Ovary (tissue), 10 donors: ENCODE measurements at regions of chr3 and their contacts with region 1.

Region 1: GRCh38 chr3:70982700-70983140 is 600.8 kb downstream of the FOXP1 start:
- DNase-seq: peak in 2 of 5 donors; percentile 22 to 41
- H3K4me3 ChIP-seq: no peak overlapping the region
- H3K27ac ChIP-seq: peak overlapping the region; percentile 74 to 78
- H3K4me1 ChIP-seq: peaks cover 18% of the 10 kb centered on the region
- H3K27me3 ChIP-seq: no peaks in the 10 kb centered on the region
- CTCF ChIP-seq: no peak
- EP300 ChIP-seq: no peak
- POLR2A ChIP-seq: no peak

Region 2: DNA sequence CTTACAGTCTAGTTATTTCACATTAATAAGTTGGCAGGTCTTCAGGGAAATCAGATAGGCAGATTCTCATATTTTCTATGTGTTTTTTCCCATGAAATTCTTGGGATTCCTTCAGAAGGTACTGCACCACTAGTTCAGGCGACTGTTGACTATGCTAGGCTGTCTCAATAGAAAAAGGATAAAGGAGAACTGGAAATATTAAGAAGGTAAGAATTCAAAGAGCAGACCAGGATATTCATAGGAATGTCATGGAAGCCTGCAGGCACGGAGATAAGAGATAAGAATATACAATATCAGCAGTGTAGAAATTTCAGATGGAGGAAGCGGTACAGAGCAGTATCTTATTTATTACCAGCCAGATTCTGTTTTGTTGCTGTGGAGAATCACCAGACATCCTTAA is 238.2 kb before region 1 on chr3:
- intact Hi-C with region 1: no loop called
- DNase-seq: no peak
- H3K4me3 ChIP-seq: no peak overlapping the region
- H3K27ac ChIP-seq: no peak overlapping the region
- H3K4me1 ChIP-seq: no peaks in the 10 kb centered on the region
- H3K27me3 ChIP-seq: no peaks in the 10 kb centered on the region
- CTCF ChIP-seq: no peak
- EP300 ChIP-seq: no peak
- POLR2A ChIP-seq: no peak

Region 3: GRCh38 chr3:71064288-71064955 is 81.7 kb after region 1 on chr3:
- intact Hi-C with region 1: loop called in 2 of 4 experiments (anchors 10 kb)
- DNase-seq: peak in 4 of 5 donors; percentile 60 to 76 (median 66)
- H3K4me3 ChIP-seq: peak overlapping the region; percentile 67
- H3K27ac ChIP-seq: peak overlapping the region; percentile 96 to 97
- H3K4me1 ChIP-seq: peaks cover 12% of the 10 kb centered on the region
- H3K27me3 ChIP-seq: no peaks in the 10 kb centered on the region
- CTCF ChIP-seq: peak in 1 of 3 donors; percentile 34
- EP300 ChIP-seq: no peak
- POLR2A ChIP-seq: peak; percentile 12

Region 4: DNA sequence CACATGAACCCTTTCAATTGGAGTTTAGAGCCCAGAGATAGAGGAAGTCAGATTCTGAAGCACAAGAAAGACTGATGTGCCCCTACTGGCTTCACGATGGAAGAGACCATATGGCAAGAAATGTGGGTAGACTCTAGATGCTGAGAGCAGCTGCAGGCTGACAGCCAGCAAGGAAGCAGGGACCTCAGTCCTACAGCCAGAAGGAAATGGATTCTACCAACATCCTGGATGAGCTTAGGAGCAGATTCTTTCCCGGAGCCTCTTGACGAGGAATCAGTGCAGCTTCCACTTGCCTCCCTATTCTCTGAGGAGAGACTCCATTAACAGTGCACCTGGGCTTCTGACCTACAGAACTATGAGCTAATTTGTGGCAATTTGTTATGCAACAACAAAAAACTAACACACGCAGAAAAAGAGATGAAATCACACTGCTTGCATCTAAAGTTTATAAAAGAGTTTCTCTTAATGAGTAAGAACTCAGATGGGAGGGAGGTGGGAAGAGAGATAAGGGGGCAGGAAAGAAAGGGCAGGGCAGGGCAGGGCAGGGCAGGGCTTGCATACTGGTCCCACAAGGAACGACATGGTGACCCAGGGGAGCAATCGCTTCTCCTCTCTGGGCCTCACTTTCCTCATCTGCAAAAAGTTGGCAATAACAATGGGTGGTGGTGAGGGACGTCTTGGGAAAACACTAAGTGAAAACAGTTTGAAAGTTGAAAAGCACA is 159.9 kb after region 1 on chr3:
- intact Hi-C with region 1: no loop called
- DNase-seq: peak in 1 of 5 donors; percentile 51
- H3K4me3 ChIP-seq: no peak overlapping the region
- H3K27ac ChIP-seq: no peak overlapping the region
- H3K4me1 ChIP-seq: peaks cover 4% of the 10 kb centered on the region
- H3K27me3 ChIP-seq: no peaks in the 10 kb centered on the region
- CTCF ChIP-seq: no peak
- EP300 ChIP-seq: no peak
- POLR2A ChIP-seq: no peak